HepG2 (cell line): ENCODE measurements at regions of chr11 and their contacts with region 1.

Region 1: DNA sequence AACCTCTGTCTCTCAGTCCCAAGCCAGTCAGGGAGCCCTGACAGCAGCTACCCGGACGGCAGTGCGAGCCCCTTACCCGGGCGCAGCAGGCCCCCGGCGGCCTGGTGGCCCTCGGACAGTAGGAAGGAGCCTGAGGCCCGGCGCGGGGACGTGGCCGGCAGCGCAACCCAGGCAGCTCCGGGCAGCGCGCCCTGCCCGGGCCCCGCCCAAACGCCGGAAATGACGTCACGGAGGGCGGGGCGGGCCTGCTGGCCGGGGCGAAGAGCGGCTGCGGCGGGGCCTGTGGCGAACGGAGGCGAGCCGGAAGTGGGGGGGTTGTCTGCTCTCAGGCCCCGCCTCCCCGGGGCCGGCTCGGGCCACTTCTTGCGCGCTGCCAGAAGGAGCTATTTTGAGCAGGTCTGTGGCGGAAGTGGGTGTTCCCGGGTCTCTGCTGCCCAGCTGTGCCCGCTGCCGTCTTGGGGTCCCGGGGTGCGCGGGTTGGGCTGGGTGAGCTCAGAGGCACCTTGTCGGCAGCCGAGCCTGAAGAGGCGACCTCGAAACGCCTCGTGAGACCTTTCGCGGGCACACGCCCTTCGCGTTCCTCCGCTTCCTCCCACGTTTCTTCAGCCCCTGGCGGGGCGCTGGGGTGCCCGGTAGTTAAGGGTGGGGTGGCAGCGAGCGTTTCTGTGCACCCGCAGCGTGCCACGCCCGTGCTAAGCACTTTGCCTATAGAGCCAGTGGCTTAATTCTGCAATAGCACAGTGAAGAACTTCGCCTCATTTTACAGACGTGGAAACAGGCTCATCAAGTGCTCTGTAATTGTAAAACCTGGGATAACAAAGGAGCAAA is at the start of gene C11orf24:
- DNase-seq: peak; percentile 84
- ATAC-seq: peak; percentile 90
- H3K4me3 ChIP-seq: peak within 1 kb of the TSS; percentile 97 to 99 (median 98)
- H3K27ac ChIP-seq: peak within 1 kb of the TSS; percentile 92
- H3K4me1 ChIP-seq: peaks cover 74% of the 10 kb centered on the region
- H3K27me3 ChIP-seq: no peaks in the 10 kb centered on the region; a peak in 1 of 5 replicates
- CTCF ChIP-seq: no peak; the same call in 1 of the 2 replicates
- EP300 ChIP-seq: 0 out of 4 replicates have a peak, but pooled peaks have one; percentile 12 to 24
- POLR2A ChIP-seq: peak; percentile 57 to 96; a peak in 3 of 4 replicates
- RAD21 ChIP-seq: no peak
- total RNA-seq, gene C11orf24: 50.8 and 55.5 TPM in 2 replicates

Region 2: DNA sequence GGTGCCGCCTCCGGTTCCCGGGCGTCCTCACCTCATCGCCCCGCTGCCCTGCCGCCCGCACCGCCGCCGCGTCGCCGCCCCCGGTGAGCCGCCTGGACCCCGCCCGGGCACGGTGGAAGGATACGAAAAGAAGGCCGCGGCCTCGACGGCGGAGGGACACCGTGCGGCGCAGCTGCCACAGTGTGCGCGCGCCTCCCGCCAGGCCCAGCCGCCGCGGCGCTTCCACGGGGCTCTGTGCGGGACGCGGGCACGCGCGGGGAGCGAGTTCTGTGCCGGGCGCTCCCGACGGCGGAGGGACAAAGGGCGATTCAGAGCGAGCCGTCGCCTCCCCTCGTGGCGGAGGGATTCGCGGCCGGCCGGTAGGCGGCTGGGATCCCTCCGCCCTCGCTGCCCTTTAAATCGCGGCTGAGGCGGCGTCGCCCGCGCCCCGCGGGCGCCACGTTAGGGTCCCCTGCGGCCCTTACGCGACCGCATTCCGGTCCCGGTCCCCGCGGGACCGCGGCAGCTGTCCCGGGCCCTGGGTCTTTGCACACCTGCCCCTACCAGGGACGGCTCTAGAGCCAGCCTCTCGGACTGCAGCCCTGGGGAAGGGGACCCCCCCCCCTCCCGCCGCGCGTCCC is 58.3 kb before region 1 on chr11:
- CTCF ChIA-PET with region 1: no interaction called
- POLR2A ChIA-PET with region 1: interaction called, 15 read pairs
- in situ Hi-C with region 1: no loop called
- intact Hi-C with region 1: no loop called
- DNase-seq: peak; percentile 76
- ATAC-seq: peak; percentile 16
- H3K4me3 ChIP-seq: peak overlapping the region; percentile 63 to 74 (median 63)
- H3K27ac ChIP-seq: peak overlapping the region; percentile 98
- H3K4me1 ChIP-seq: peaks cover 67% of the 10 kb centered on the region
- H3K27me3 ChIP-seq: no peaks in the 10 kb centered on the region; a peak in 1 of 5 replicates
- CTCF ChIP-seq: peak; percentile 16; the same call in 1 of the 2 replicates
- EP300 ChIP-seq: no peak
- POLR2A ChIP-seq: peak; percentile 97
- RAD21 ChIP-seq: peak; percentile 76

Region 3: GRCh38 chr11:68235650-68236049 is 36.3 kb before region 1 on chr11:
- CTCF ChIA-PET with region 1: no interaction called
- POLR2A ChIA-PET with region 1: no interaction called
- in situ Hi-C with region 1: no loop called
- intact Hi-C with region 1: no loop called
- DNase-seq: no peak
- ATAC-seq: peak; percentile 54; the same call in 2 of the 3 replicates
- H3K4me3 ChIP-seq: peak overlapping the region in 1 of 3 experiments; percentile 37; a peak in 1 of 6 replicates
- H3K27ac ChIP-seq: no peak overlapping the region
- H3K4me1 ChIP-seq: peaks cover 14% of the 10 kb centered on the region
- H3K27me3 ChIP-seq: 0 out of 5 replicates have a peak, but pooled peaks cover 0 to 3% of the 10 kb centered on the region in 2 experiments
- CTCF ChIP-seq: no peak
- EP300 ChIP-seq: no peak
- POLR2A ChIP-seq: no peak
- RAD21 ChIP-seq: no peak

Region 4: DNA sequence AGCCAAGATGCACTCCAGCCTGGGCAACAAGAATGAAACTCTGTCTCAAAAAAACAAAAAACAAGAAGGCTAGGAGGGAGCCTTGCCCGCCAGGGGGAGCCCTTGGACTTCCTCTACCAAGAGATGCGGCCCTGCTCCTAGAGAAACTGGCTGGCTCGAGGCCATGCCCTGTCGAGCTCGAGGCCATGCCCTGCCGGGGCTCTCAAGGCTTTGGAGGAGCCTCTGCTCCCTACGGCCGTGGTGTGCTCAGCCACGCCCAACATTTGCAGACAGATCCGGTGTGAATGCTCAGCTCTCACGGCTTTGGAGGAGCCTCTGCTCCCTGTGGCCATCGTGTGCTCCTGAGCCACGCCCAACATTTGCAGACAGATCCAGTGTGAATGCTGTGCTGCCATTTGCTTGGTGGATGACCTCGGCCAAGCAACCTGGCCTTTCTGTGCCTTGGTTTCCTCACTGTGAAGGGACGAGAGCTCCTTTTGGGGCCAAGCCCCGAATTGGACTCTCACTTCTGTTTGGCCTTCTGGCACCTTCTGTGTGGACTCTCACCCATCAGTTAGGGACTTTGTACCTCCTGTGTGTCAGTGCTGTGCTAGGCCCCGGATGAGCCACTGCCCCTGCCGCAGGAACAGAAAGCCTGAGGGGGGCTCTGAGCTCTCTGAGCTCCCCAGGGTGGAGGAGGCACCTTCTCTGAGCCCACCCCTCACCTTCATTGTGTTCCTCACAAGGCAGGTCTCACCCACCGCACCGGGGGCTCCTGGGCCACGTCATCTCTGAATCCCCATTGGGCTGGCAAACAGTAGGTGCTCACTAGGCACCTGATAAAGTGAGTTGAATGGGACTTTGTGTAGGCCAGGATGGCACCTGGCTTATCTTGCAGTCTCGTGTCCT is 14.3 kb before region 1 on chr11:
- CTCF ChIA-PET with region 1: interaction called, 3 read pairs
- POLR2A ChIA-PET with region 1: interaction called, 23 read pairs
- in situ Hi-C with region 1: no loop called
- intact Hi-C with region 1: no loop called
- DNase-seq: peak; percentile 83
- ATAC-seq: peak; percentile 76
- H3K4me3 ChIP-seq: peak overlapping the region in 1 of 3 experiments; percentile 17; a peak in 1 of 6 replicates
- H3K27ac ChIP-seq: no peak overlapping the region
- H3K4me1 ChIP-seq: peaks cover 33% of the 10 kb centered on the region
- H3K27me3 ChIP-seq: no peaks in the 10 kb centered on the region; a peak in 1 of 5 replicates
- CTCF ChIP-seq: peak; percentile 92
- EP300 ChIP-seq: no peak
- POLR2A ChIP-seq: 0 out of 4 replicates have a peak, but pooled peaks of 1 of the 2 experiments have one; percentile 16
- RAD21 ChIP-seq: peak; percentile 93

Region 5: GRCh38 chr11:68287419-68287818 is 15.4 kb after region 1 on chr11:
- CTCF ChIA-PET with region 1: no interaction called
- POLR2A ChIA-PET with region 1: interaction called, 10 read pairs
- in situ Hi-C with region 1: no loop called
- intact Hi-C with region 1: no loop called
- DNase-seq: no peak
- ATAC-seq: no peak
- H3K4me3 ChIP-seq: no peak overlapping the region
- H3K27ac ChIP-seq: no peak overlapping the region
- H3K4me1 ChIP-seq: peaks cover 3% of the 10 kb centered on the region
- H3K27me3 ChIP-seq: no peaks in the 10 kb centered on the region
- CTCF ChIP-seq: no peak
- EP300 ChIP-seq: no peak
- POLR2A ChIP-seq: no peak
- RAD21 ChIP-seq: no peak

Region 6: GRCh38 chr11:68312117-68312779 is 40.3 kb after region 1 on chr11 and contains the start of gene LRP5:
- CTCF ChIA-PET with region 1: no interaction called
- POLR2A ChIA-PET with region 1: interaction called, 33 read pairs
- in situ Hi-C with region 1: no loop called
- intact Hi-C with region 1: no loop called
- DNase-seq: no peak
- ATAC-seq: no peak
- H3K4me3 ChIP-seq: peak within 1 kb of the TSS; percentile 89 to 98 (median 95)
- H3K27ac ChIP-seq: peak within 1 kb of the TSS; percentile 91
- H3K4me1 ChIP-seq: peaks cover 66% of the 10 kb centered on the region
- H3K27me3 ChIP-seq: no peaks in the 10 kb centered on the region; a peak in 1 of 5 replicates
- CTCF ChIP-seq: no peak
- EP300 ChIP-seq: no peak
- POLR2A ChIP-seq: peak in 1 of 2 experiments; percentile 31; a peak in 2 of 4 replicates
- RAD21 ChIP-seq: no peak
- total RNA-seq, gene LRP5: 23.6 and 40.4 TPM in 2 replicates

Region 7: DNA sequence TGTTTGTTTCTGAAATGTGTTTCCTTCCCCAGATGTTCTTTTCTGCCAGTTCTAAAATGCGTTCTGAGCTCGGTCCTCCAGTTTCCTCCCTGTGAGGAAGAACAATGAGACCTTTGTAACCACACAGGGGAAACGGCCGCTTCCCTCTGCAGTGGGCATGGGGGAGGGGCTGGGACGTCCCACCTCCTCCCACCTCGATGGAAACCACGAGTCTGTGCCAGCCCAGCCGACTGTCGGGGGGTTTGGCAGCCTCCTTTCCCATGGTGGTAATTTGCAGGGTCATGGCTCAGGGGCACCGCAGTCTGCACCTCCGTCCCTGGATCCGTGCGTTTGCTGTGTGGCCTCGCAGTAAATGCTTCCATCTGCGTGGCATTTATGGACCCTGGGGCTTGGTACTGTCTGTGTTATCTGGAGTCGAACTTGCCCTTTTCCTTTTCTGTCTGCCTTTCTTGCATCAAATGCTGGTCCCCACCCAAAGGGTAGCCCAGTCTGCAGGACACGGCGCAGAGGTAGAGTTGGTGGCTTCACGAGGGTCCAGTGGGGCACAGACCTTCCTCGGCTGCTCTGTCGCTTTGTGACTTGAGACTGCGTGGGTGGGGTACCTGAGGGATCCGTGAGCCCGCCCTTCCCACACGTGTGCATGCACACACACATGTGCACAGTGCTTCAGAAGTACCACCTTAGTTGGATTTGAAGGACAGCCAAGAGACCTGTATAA is 56.5 kb after region 1 on chr11:
- CTCF ChIA-PET with region 1: no interaction called
- POLR2A ChIA-PET with region 1: interaction called, 20 read pairs
- in situ Hi-C with region 1: no loop called
- intact Hi-C with region 1: no loop called
- DNase-seq: peak; percentile 86
- ATAC-seq: peak; percentile 44
- H3K4me3 ChIP-seq: peak overlapping the region in 1 of 3 experiments; percentile 27; a peak in 1 of 6 replicates
- H3K27ac ChIP-seq: peak overlapping the region; percentile 82
- H3K4me1 ChIP-seq: peaks cover 100% of the 10 kb centered on the region
- H3K27me3 ChIP-seq: no peaks in the 10 kb centered on the region
- CTCF ChIP-seq: no peak
- EP300 ChIP-seq: peak in 1 of 2 experiments; percentile 52; a peak in 1 of 4 replicates
- POLR2A ChIP-seq: no peak
- RAD21 ChIP-seq: no peak

Region 8: GRCh38 chr11:68459886-68460740 is 188.1 kb after region 1 on chr11:
- CTCF ChIA-PET with region 1: no interaction called
- POLR2A ChIA-PET with region 1: interaction called, 10 read pairs
- in situ Hi-C with region 1: no loop called
- intact Hi-C with region 1: no loop called
- DNase-seq: peak; percentile 97
- ATAC-seq: peak; percentile 83
- H3K4me3 ChIP-seq: peak overlapping the region; percentile 83 to 95 (median 94); a peak in 5 of 6 replicates
- H3K27ac ChIP-seq: peak overlapping the region; percentile 97
- H3K4me1 ChIP-seq: peaks cover 82% of the 10 kb centered on the region
- H3K27me3 ChIP-seq: no peaks in the 10 kb centered on the region; a peak in 1 of 5 replicates
- CTCF ChIP-seq: 0 out of 2 replicates have a peak, but pooled peaks have one; percentile 5
- EP300 ChIP-seq: peak; percentile 10 to 48; a peak in 1 of 4 replicates
- POLR2A ChIP-seq: peak; percentile 21 to 54; a peak in 3 of 4 replicates
- RAD21 ChIP-seq: no peak